Vagina (tissue), 2 donors: ENCODE measurements at regions of chr2 and their contacts with region 1.

Region 1: GRCh38 chr2:70861777-70862625 is 26.4 kb upstream of the CD207 start:
- DNase-seq: no peak
- H3K4me3 ChIP-seq: no peak overlapping the region
- H3K27ac ChIP-seq: no peak overlapping the region
- H3K4me1 ChIP-seq: no peaks in the 10 kb centered on the region
- H3K27me3 ChIP-seq: no peaks in the 10 kb centered on the region
- CTCF ChIP-seq: peak; percentile 43 to 79 (median 59)
- POLR2A ChIP-seq: no peak

Region 2: DNA sequence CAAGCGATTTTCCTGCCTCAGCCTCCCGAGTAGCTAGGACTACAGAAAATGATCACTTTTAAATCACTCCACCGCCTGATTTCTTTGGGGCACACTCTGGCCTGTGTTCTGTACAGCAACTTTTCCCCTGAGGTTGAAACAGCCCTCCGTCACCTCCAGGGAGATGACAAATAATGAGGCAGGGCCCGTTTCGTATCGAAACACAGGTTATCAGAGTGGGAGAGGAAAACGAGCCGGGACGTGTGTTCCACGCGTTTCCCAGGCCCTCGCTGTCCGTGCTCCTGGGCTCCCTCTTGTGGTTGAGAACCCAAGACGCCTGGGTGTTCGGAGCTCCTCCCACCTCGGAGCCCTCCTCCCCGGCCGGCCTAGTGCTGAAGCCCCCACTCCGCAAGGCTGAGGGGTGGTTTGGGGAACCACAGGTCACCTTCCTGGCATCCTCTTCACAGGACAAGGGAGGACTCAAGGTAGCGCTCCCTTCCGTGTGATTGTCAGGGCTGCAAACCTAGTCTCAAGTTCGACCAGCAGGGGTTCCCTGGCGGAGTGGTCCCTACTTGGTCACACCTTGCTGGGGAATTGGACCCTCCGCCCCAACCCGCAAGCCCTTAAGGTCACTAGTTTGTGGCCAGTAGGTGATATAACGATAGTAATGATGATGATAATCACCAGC is 86.5 kb after region 1 on chr2:
- intact Hi-C with region 1: loop called (anchors 10 kb)
- DNase-seq: peak in 1 of 2 donors; percentile 84
- H3K4me3 ChIP-seq: peak overlapping the region; percentile 33 to 36
- H3K27ac ChIP-seq: no peak overlapping the region
- H3K4me1 ChIP-seq: peaks cover 12% of the 10 kb centered on the region
- H3K27me3 ChIP-seq: no peaks in the 10 kb centered on the region
- CTCF ChIP-seq: peak; percentile 46 to 81 (median 61)
- POLR2A ChIP-seq: no peak